GM18951 (cell line): ENCODE measurements at regions of chr5 and their contacts with region 1.

Region 1: DNA sequence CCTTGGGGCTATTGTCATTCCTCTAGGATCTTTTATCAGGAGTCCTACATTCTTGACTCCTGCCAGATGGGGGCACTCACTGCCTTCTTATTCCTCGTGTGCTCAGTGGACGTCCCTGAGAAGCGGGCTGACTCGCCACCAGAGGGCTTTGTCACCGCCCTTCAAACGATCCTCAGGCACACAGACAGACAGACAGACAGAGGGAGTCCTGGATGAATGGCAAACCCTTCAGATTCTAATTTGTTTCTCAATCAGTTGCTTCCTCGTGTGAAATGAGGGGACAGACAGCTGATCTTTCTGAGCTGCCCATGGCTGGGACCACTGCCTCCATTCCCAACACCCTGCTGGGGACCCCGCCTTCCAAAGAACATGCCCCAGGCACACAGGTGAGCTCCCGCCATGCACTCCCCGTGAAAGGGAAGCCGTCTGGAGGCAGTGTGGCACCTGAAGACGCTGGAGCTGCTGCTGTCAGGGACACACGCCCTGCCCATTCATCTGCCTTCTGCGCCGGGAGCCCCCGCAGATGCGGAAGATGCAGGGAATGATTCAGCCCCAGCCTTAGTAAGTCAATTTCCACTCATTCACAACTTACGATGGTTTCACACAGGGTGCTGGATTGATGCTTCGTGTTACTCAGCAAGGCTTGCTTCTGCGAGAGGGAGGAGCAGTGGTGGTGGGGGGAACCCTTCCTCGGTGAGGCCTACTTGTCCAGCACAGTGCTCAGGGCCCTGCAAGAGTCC is 24.9 kb upstream of the SH3PXD2B start:
- POLR2A ChIP-seq: no peak

Region 2: GRCh38 chr5:172697123-172698121 is 218.2 kb after region 1 on chr5:
- in situ Hi-C with region 1: loop called (anchors 10 kb)
- POLR2A ChIP-seq: peak; percentile 51

Region 3: DNA sequence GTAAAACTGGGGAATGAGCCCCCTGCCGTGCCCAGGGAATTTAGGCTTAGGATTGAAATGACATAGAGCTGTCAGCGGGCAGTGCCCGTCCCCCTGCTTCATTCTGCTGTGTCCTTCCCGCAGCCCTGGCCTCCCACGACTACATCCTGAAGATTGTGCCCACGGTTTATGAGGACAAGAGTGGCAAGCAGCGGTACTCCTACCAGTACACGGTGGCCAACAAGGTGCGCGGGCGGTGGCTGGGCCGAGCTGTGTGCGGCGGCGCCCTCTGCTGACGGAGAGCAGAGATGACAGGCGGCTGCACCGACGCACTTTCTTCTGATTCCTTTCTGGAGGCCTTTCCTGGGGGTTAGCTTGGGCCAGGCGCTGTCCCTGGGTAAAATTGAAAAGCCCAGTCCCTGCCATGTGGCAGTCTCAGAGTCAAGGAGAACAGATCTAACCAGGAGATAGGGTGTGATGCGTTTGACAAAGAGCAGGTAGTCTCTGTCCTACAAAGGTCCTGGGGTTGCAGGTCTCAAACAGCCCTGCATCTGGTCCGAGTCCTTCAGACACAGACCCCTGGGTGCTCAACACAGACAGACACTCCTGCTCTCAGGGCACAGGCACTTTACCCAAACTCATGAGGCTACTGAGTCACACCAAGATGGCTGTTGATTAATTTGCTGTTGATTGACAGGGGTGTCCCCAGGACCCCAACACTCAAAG is 453.3 kb after region 1 on chr5:
- in situ Hi-C with region 1: loop called (anchors 25 kb)
- POLR2A ChIP-seq: no peak